ENCODE measurements at regions of chr9 and their contacts with region 1.

Region 1: GRCh38 chr9:21317956-21318923 is 13.1 kb upstream of the IFNA5 start:
- ATAC-seq: peak; percentile 71 to 89 (median 77)
- H3K4me3 ChIP-seq: no peak overlapping the region
- H3K27ac ChIP-seq: no peak overlapping the region
- H3K4me1 ChIP-seq: peaks cover 3 to 4% of the 10 kb centered on the region in 2 donors

Region 2: DNA sequence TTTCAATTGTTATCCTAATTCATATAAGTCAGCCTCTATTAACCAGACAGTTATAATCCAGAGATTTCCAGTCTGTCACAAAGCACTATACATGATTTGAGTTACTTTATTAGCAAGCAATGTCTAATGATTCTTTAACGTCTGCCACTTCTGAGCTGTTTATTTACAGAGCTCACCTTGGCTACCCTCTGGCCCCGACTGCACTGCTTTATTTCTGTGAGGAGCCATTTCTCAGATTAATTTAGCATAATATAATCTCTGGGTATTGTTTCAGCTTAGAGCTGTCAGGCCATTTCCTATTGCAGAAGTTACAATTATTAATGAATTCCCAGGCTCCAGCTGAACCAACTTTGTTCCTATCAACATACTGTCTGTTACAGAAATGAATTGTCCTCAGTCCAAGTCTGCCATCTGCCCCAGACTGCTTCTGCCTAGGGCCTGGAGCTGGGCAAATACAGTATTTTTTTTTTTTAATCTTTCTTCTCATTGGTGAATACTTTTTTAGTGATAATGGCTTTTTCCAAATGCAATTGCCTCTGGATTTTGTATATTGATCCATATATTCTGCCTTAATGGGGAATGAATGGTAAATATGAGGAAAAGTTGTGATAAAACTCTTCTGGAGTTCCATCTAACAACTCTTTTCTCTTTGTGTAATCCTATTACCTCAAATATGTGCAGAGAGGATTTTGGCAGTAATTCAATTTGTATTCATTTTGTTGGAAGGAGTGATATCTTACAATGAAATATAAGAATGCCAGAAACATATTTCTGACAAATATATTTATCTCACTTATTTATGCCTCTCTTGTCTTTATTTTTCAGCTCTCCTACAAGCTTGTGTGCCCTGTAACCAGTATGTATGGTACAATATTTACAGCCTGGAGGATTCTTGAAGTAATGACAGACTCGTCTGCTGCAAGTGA is 529.5 kb before region 1 on chr9:
- in situ Hi-C with region 1: no loop called
- ATAC-seq: peak in 2 of 8 experiments; percentile 27 to 41
- H3K4me3 ChIP-seq: no peak overlapping the region
- H3K27ac ChIP-seq: no peak overlapping the region
- H3K4me1 ChIP-seq: no peaks in the 10 kb centered on the region

Region 3: DNA sequence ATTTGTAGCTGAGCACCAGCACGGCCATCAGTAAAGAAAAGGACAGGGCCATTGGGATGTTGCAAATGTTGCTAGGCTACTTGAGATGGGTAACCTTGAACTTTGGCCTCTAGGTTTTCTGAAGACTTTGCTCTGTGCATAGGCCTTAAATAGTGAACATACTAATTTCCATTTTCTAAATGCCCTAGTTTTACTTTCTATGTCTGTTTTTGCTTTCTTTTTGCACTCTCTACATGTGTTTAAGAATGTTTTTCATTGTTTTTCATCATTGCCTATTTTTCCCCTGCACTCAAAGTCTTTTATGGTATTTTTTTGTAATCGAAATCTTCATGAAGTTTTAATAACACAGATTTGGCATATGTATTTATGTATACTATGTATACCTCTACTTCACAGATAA is 90.1 kb before region 1 on chr9 and contains the start of gene IFNA17:
- in situ Hi-C with region 1: no loop called
- ATAC-seq: no peak
- H3K4me3 ChIP-seq: no peak within 1 kb of the TSS
- H3K27ac ChIP-seq: no peak within 1 kb of the TSS
- H3K4me1 ChIP-seq: no peaks in the 10 kb centered on the region
- total RNA-seq, gene IFNA17: 0.23 to 0.38 TPM in 2 of 8 experiments, not detected in the others

Region 4: DNA sequence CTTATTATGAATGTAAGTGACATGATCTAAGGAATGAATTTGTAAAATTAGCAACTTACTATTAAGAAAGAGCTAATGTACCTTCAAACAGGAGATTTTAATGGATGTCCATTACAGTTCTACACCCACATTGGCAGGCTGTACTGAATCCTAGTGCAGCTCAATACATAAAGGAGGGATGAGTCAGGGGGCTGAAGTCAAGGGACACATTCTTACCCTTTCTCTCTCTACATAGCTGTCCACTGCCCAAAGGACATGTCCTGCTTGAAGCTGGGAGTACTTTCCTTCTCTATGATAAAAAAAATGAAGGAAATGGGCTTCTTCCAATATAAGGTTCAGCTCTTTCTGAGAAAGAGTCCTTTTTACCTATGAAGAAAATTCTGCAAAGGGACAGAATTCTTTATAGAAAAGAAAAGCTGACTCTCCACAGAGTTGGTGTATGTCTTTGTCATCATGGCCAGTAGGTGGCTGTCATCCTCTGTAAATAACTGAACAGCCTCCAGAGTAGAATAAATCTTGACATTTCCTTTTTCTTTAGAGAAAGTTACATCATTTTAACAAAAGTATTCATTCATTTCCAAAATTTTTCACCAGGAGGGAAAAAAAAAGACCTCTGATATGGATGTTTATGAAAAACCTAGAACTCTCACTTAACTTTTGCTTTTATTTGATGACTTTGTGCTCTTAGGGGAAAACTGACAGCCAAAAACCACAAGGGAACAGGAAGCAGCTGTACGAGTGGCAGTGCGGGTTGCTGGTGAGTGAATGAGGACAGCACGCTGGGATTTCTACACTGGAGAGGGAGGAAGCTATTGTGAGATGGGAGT is 65.3 kb before region 1 on chr9:
- in situ Hi-C with region 1: loop called in 1 of 9 experiments (anchors 10 kb)
- ATAC-seq: peak; percentile 60 to 93 (median 84)
- H3K4me3 ChIP-seq: no peak overlapping the region
- H3K27ac ChIP-seq: no peak overlapping the region
- H3K4me1 ChIP-seq: no peaks in the 10 kb centered on the region

Region 5: GRCh38 chr9:21402386-21403251 is 84.4 kb after region 1 on chr9:
- in situ Hi-C with region 1: loop called in 2 of 9 experiments (anchors 10 to 25 kb)
- ATAC-seq: peak; percentile 63 to 91 (median 74)
- H3K4me3 ChIP-seq: peak overlapping the region; percentile 19 to 37 (median 30)
- H3K27ac ChIP-seq: no peak overlapping the region
- H3K4me1 ChIP-seq: no peaks in the 10 kb centered on the region

Measured in motor neuron (in vitro differentiated cells).